Head of caudate nucleus (tissue), 42 donors: ENCODE measurements at regions of chr2 and their contacts with region 1.

Region 1: DNA sequence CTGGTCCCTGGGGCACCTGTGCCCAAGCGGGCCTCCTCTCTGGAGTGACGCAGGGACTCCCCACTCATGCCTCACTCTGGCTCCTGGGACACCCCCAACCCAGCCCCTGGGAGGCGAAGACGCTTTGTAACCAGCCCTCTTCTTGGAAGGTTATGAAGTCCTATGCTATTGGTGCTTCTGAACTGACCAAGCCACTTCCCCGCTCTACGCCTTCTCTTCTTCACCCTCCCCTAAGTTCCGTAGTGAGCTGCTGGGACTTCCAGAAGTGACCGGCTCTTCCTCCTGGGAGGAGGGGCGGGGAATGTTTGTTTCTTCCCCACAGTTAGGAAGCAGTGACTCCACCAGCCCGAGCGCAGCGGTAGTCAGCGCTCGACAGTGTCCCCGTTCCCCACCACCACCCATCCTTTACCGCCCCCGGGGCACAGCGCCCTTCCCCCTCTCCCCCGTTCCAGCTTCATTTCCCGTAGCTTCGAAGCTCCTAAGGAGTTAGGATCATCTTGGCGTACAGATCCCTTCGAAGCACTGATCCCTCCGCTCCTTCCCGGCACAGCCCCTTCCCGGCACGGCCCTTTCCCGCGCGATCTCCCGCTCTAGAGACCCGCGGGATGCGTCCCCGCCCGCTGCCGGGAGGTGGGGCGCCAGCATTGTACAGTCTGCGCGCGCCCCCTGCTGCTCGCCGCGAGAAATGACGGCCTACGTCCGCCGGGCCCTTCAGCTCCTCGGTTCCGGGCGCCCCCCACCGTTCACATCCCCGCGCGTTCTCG is 25.3 kb upstream of the NOTO start:
- DNase-seq: peak; percentile 80 to 96 (median 92)

Region 2: DNA sequence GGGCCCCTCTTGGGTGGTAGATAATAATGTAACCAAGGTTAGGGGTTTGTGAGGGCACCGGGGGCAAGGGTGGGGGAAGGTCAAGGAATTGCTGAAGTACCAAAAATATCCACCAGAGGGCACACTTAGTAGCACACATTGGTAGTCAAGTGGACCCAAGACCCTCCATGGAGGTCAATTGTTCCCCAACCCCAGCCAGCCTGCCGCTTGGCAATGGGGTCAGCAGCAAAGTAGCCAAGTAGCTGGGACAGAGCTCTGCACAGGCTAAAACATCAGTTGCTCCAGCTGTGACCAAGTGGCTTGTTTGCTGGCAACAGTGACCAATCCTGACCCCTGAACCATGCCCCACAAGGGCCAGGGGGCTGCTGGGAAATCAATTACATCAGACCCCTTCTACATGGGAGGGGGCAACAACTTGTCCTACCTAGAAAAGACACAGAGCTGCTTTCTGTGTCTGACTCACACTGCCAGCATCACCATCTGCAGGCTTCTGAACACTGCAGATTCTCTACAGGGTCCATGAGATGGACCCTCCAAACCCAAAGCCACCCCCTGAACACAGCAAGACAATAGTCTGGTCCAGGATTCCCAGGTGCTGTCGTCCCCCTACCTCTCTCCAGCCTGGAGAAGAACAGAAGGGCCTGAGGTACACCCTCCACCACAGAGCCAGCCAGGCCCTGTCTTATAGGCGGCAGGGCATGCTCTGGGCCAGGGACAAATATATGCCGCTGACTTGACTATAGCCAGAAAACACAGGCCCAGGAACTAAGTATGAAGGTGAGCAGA is 183.7 kb before region 1 on chr2:
- intact Hi-C with region 1: loop called (anchors 5 kb)
- DNase-seq: peak in 20 of 42 donors; percentile 17 to 79 (median 43)